Endothelial cell of umbilical vein (primary cell): ENCODE measurements at regions of chr6 and their contacts with region 1.

Region 1: GRCh38 chr6:73732845-73733675 is 37.1 kb downstream of the CD109 start:
- DNase-seq: peak; percentile 78
- H3K4me3 ChIP-seq: no peak overlapping the region
- H3K27ac ChIP-seq: no peak overlapping the region
- H3K4me1 ChIP-seq: no peaks in the 10 kb centered on the region
- H3K27me3 ChIP-seq: no peaks in the 10 kb centered on the region
- CTCF ChIP-seq: peak; percentile 91 to 93
- POLR2A ChIP-seq: no peak

Region 2: GRCh38 chr6:73675466-73676098 is 57.5 kb before region 1 on chr6:
- CTCF ChIA-PET with region 1: interaction called, 343 read pairs
- POLR2A ChIA-PET with region 1: no interaction called
- dilution Hi-C with region 1: no loop called
- intact Hi-C with region 1: loop called (anchors 1 kb)
- DNase-seq: peak; percentile 85
- H3K4me3 ChIP-seq: no peak overlapping the region
- H3K27ac ChIP-seq: no peak overlapping the region
- H3K4me1 ChIP-seq: peaks cover 3% of the 10 kb centered on the region
- H3K27me3 ChIP-seq: no peaks in the 10 kb centered on the region
- CTCF ChIP-seq: peak; percentile 82 to 84
- POLR2A ChIP-seq: no peak

Region 3: GRCh38 chr6:73688351-73688750 is 44.7 kb before region 1 on chr6:
- CTCF ChIA-PET with region 1: interaction called, 19 read pairs
- POLR2A ChIA-PET with region 1: no interaction called
- dilution Hi-C with region 1: no loop called
- intact Hi-C with region 1: no loop called
- DNase-seq: no peak
- H3K4me3 ChIP-seq: no peak overlapping the region
- H3K27ac ChIP-seq: no peak overlapping the region
- H3K4me1 ChIP-seq: no peaks in the 10 kb centered on the region
- H3K27me3 ChIP-seq: no peaks in the 10 kb centered on the region
- CTCF ChIP-seq: no peak
- POLR2A ChIP-seq: no peak

Region 4: GRCh38 chr6:73695619-73696421 is 37.2 kb before region 1 on chr6 and contains the start of gene CD109:
- CTCF ChIA-PET with region 1: interaction called, 16 read pairs
- POLR2A ChIA-PET with region 1: no interaction called
- dilution Hi-C with region 1: no loop called
- intact Hi-C with region 1: loop called (anchors 1 kb)
- DNase-seq: peak; percentile 94
- H3K4me3 ChIP-seq: peak within 1 kb of the TSS; percentile 40 to 88 (median 63)
- H3K27ac ChIP-seq: peak within 1 kb of the TSS; percentile 93
- H3K4me1 ChIP-seq: peaks cover 43% of the 10 kb centered on the region
- H3K27me3 ChIP-seq: no peaks in the 10 kb centered on the region
- CTCF ChIP-seq: no peak
- POLR2A ChIP-seq: peak; percentile 70
- total RNA-seq, gene CD109: 86.2 and 107 TPM in 2 replicates

Region 5: DNA sequence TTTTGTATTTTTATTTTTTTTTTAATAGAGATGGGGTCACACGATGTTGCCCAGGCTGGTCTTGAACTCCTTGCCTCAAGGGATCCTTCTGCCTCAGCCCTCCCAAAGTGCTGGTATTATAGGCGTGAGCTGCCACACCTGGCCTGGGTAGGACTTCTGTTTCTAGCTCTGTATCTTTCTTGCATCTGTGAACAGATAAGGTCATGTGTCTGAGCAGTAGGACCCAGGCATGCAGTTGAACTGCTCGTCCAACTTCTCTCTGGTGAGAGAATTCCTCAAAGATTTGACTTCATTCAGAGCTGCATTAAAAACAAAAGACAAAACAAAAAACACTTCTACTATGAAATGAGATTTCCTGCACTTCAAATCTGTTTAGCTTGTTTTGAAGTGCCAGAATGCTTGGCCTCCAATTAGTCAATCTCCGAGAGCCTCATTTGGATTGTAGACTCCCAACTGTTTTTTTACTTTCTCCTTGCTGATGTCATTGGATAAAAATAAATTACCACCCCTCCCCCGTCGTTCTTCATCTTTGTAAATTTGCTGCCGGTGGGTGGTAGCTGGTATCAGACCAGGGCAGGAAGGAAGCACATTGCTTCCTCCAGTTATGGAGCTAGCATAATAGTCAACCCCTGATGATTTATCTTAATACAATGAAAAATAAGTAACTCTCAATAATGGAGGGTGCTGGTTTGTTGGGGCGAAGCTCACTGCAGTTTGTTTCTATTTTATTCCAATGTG is 19.5 kb before region 1 on chr6:
- CTCF ChIA-PET with region 1: interaction called, 13 read pairs
- POLR2A ChIA-PET with region 1: no interaction called
- dilution Hi-C with region 1: no loop called
- intact Hi-C with region 1: loop called (anchors 1 kb)
- DNase-seq: peak; percentile 98
- H3K4me3 ChIP-seq: peak overlapping the region in 1 of 3 experiments; percentile 30
- H3K27ac ChIP-seq: peak overlapping the region; percentile 95
- H3K4me1 ChIP-seq: peaks cover 35% of the 10 kb centered on the region
- H3K27me3 ChIP-seq: no peaks in the 10 kb centered on the region
- CTCF ChIP-seq: no peak
- POLR2A ChIP-seq: peak; percentile 60

Region 6: DNA sequence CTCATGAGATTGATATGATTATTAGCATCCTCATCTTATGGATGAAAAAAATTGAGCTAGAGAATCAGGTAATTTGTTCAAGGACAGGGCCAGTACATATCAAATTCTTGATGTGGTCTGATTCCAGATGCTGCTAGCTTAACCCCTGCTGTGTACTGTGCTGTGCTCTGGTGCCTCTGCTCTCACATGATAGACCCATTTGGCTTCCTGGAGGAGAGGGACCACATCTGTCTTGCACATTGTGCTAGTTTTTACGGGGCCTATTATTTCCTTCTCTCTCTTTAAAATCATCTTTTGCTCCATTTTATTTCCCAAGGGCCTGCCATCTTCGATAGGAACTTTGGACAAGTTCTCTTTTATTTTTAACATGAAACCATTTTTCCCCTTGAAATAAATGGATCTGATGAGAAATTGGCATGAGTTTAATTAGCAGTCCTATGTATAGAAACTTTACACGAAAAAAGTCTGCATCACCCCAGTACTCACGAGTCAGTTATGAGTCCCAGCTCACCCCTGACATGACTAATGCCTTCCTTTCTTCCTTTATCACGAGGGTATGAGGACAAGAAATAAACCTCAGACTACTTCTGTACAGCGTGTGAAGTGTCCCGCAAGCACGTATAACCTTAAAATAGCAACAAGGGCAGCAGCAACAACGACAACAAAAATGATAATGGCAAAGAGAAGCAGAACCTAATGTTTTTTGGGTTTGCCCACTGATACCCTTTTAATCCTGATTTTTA is 10.6 kb before region 1 on chr6:
- CTCF ChIA-PET with region 1: interaction called, 15 read pairs
- POLR2A ChIA-PET with region 1: no interaction called
- dilution Hi-C with region 1: no loop called
- intact Hi-C with region 1: no loop called
- DNase-seq: peak; percentile 91
- H3K4me3 ChIP-seq: no peak overlapping the region
- H3K27ac ChIP-seq: peak overlapping the region; percentile 96
- H3K4me1 ChIP-seq: peaks cover 18% of the 10 kb centered on the region
- H3K27me3 ChIP-seq: no peaks in the 10 kb centered on the region
- CTCF ChIP-seq: no peak
- POLR2A ChIP-seq: no peak